ENCODE measurements at regions of chr22 and their contacts with region 1.

Region 1: GRCh38 chr22:27880778-27881394 is 38.2 kb downstream of the PITPNB start:
- DNase-seq: peak; percentile 38
- H3K4me3 ChIP-seq: no peak overlapping the region
- H3K27ac ChIP-seq: peak overlapping the region; percentile 29 to 76
- H3K4me1 ChIP-seq: peaks cover 8 to 58% of the 10 kb centered on the region in 2 experiments
- H3K27me3 ChIP-seq: no peaks in the 10 kb centered on the region
- CTCF ChIP-seq: peak; percentile 89
- EP300 ChIP-seq: no peak
- RAD21 ChIP-seq: peak; percentile 87

Region 2: DNA sequence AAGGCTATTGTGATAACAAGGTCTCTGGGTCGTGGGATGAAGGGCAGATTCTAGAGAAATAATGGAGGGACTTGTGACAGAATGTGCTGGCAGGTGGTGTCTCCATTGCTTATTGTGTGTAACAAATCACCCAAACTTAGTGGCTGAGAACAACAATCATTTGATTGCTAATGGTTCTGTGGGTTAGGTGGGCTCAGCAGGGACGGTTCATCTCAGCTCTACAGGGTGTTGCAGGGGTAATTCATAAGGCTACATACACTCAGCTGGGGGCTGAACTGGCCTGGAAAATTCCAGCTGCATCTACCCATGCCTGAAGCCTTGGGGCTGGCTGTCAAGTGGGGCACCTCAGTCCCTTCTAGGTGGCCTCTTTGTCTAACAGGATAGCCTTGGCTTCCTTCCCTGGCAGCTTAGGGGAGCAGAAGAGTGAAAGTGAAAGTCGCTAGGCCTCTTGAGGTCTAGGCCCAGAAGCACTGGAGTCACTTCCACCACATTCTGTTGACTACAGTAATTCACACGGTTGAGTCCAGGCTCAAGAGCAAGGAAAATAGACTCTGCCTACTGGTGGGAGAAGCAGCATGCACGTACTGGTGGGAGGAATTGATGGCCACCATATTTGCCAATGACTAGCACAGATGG is 388.2 kb before region 1 on chr22:
- CTCF ChIA-PET with region 1: no interaction called
- POLR2A ChIA-PET with region 1: no interaction called
- DNase-seq: no peak
- H3K4me3 ChIP-seq: no peak overlapping the region
- H3K27ac ChIP-seq: no peak overlapping the region
- H3K4me1 ChIP-seq: peaks cover 5 to 12% of the 10 kb centered on the region in 2 experiments; a peak in 2 of 4 replicates
- H3K27me3 ChIP-seq: no peaks in the 10 kb centered on the region
- CTCF ChIP-seq: no peak
- EP300 ChIP-seq: no peak
- RAD21 ChIP-seq: no peak

Region 3: DNA sequence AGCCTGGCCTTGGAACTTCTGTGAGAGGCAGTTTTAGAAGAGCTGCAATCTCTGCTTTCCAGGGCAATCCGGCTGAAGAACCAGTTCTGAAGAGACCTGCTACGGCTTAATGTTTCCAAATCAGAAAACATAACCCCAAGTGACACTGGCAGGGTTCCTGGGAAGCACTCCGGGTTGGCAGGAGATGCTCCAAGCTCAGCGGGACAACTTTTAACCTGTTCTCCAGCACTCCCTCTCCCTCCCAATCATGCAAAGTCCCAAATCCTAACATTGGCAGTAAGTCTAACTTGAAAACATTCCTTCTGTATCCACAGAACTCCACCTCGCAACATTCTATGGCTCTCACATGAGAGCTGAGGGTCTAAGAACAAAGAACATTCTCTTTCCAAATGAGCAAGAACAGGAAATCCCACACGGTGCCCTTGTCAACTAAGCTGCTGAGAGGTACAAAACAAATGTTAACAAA is 30.9 kb before region 1 on chr22:
- CTCF ChIA-PET with region 1: interaction called, 33 read pairs
- POLR2A ChIA-PET with region 1: no interaction called
- DNase-seq: no peak
- H3K4me3 ChIP-seq: no peak overlapping the region
- H3K27ac ChIP-seq: peak overlapping the region in 1 of 2 experiments; percentile 99; a peak in 2 of 4 replicates
- H3K4me1 ChIP-seq: peaks cover 7 to 65% of the 10 kb centered on the region in 2 experiments; a peak in 3 of 4 replicates
- H3K27me3 ChIP-seq: no peaks in the 10 kb centered on the region
- CTCF ChIP-seq: no peak
- EP300 ChIP-seq: no peak
- RAD21 ChIP-seq: no peak

Region 4: DNA sequence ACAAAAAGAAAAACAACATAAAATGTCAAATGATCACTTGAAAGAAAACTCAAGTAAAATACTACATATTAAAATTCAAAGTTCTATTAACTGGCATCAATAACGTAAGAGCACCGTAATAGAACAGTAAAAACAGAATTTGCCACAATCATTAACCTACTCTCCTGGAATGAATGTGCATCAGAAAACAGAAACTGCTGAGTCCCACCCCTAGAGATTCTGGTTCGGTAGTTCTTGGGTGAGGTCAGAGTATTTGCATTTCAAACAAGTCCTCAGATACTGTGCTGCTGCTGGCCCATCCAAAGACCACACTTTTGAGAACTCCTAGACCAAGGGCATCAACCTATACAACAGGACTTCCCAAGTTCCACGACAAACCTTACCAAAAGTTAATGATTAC is 14.7 kb after region 1 on chr22:
- CTCF ChIA-PET with region 1: interaction called, 105 read pairs
- POLR2A ChIA-PET with region 1: no interaction called
- DNase-seq: no peak
- H3K4me3 ChIP-seq: no peak overlapping the region
- H3K27ac ChIP-seq: peak overlapping the region in 1 of 2 experiments; percentile 70; a peak in 1 of 4 replicates
- H3K4me1 ChIP-seq: peaks cover 0 to 26% of the 10 kb centered on the region in 2 experiments; a peak in 2 of 4 replicates
- H3K27me3 ChIP-seq: no peaks in the 10 kb centered on the region
- CTCF ChIP-seq: no peak
- EP300 ChIP-seq: no peak
- RAD21 ChIP-seq: no peak

Region 5: GRCh38 chr22:27937453-27937852 is 56.6 kb after region 1 on chr22:
- CTCF ChIA-PET with region 1: interaction called, 17 read pairs
- POLR2A ChIA-PET with region 1: no interaction called
- DNase-seq: peak; percentile 36
- H3K4me3 ChIP-seq: no peak overlapping the region
- H3K27ac ChIP-seq: no peak overlapping the region
- H3K4me1 ChIP-seq: no peaks in the 10 kb centered on the region
- H3K27me3 ChIP-seq: no peaks in the 10 kb centered on the region
- CTCF ChIP-seq: no peak
- EP300 ChIP-seq: no peak
- RAD21 ChIP-seq: peak; percentile 33; the same call in 1 of the 2 replicates